CD4-positive, alpha-beta memory T cell (primary cell): ENCODE measurements at regions of chr6 and their contacts with region 1.

Region 1: GRCh38 chr6:43334466-43335095 is 26.0 kb upstream of the CRIP3 start:
- DNase-seq: peak in 1 of 5 donors; percentile 12
- H3K4me3 ChIP-seq: no peak overlapping the region
- H3K4me3 Mint-ChIP-seq: no peak overlapping the region
- H3K27ac ChIP-seq: no peak overlapping the region
- H3K27ac Mint-ChIP-seq: peak overlapping the region in 6 of 7 donors; percentile 36 to 88 (median 50)
- H3K4me1 ChIP-seq: peaks cover 17% of the 10 kb centered on the region
- H3K4me1 Mint-ChIP-seq: peaks cover 15 to 30% (median 17%) of the 10 kb centered on the region in 4 donors
- H3K27me3 ChIP-seq: no peaks in the 10 kb centered on the region
- H3K27me3 Mint-ChIP-seq: no peaks in the 10 kb centered on the region

Region 2: DNA sequence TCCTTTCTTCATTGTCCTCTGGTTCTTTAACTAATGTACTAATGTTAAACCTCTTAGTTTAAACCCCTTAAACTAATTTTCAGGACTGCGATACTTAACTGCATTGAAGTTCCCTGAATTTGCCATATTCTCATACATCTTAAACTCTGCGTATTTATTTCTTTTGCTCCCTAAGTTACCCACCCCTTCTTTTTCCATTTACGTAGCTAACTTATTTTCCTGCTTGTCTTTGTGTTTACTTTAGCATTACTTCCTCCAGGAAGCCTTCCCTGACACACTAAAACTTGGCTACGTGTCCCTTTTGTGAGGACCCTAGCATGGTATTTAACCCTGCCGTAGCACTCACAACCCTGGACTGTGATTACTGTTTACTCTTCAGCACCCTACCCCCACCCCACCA is 691.8 kb before region 1 on chr6:
- CTCF ChIA-PET with region 1: no interaction called
- POLR2A ChIA-PET with region 1: no interaction called
- intact Hi-C with region 1: no loop called
- DNase-seq: no peak
- H3K4me3 ChIP-seq: no peak overlapping the region
- H3K4me3 Mint-ChIP-seq: no peak overlapping the region
- H3K27ac ChIP-seq: no peak overlapping the region
- H3K27ac Mint-ChIP-seq: peak overlapping the region in 4 of 7 donors; percentile 25 to 68 (median 58)
- H3K4me1 ChIP-seq: no peaks in the 10 kb centered on the region
- H3K4me1 Mint-ChIP-seq: peaks cover 5 to 13% (median 9%) of the 10 kb centered on the region in 4 donors
- H3K27me3 ChIP-seq: no peaks in the 10 kb centered on the region
- H3K27me3 Mint-ChIP-seq: no peaks in the 10 kb centered on the region

Region 3: DNA sequence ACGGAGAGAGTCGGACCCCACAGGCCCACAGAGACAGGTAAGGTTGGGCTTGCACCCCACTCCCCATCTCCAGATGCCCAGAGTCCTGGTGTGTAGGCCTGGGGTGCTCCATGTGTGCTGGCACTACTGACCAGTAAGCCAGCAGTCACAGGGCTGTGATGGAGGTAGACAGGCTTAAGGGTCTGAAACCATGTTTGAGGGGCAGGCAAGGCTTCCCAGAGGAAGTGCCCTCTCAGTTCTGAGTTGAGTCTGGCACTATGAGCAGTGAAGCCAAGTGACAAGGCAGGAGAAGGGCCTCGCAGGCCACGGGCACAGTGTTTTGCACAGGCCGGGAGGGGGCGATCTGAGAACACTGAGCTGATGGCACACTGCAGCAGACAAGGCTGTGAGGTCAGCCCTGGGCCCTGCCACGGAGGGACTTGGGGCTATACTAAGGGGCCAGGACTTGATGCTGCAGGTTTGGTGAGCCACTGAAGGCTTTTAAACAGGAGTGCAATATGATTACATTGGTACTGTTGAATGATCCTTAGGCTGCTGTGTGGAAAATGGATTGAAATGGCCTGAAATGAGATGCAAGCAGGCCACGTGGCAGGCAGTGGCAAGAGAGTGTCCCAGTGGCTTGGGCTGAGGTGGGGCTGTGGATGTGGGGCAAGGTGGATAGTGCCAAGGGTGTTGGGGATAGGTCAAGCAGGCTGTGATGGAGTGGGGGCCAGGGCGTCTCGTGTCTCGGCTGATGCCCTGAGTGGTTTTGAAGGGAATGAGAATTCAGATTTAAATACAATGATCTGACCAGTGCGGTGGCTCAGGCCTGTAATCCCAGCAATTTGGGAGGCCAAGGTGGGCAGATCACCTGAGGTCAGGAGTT is 71.0 kb before region 1 on chr6:
- CTCF ChIA-PET with region 1: interaction called, 3 read pairs
- POLR2A ChIA-PET with region 1: no interaction called
- intact Hi-C with region 1: loop called (anchors 2 kb)
- DNase-seq: peak; percentile 65 to 71 (median 66)
- H3K4me3 ChIP-seq: no peak overlapping the region
- H3K4me3 Mint-ChIP-seq: peak overlapping the region in 1 of 8 donors; percentile 9
- H3K27ac ChIP-seq: no peak overlapping the region
- H3K27ac Mint-ChIP-seq: no peak overlapping the region
- H3K4me1 ChIP-seq: peaks cover 6% of the 10 kb centered on the region
- H3K4me1 Mint-ChIP-seq: peaks cover 0 to 4% (median 2%) of the 10 kb centered on the region in 4 donors
- H3K27me3 ChIP-seq: no peaks in the 10 kb centered on the region
- H3K27me3 Mint-ChIP-seq: peaks cover 0 to 1% of the 10 kb centered on the region in 2 donors